ENCODE measurements at regions of chr20 and their contacts with region 1.

Region 1: GRCh38 chr20:17604852-17605660 is 35.2 kb downstream of the DSTN start:
- DNase-seq: peak; percentile 75
- ATAC-seq: peak; percentile 71
- H3K4me3 ChIP-seq: no peak overlapping the region
- H3K27ac ChIP-seq: 0 out of 2 replicates have a peak overlapping the region, but pooled peaks have one; percentile 9
- H3K4me1 ChIP-seq: peaks cover 23% of the 10 kb centered on the region
- H3K27me3 ChIP-seq: no peaks in the 10 kb centered on the region
- CTCF ChIP-seq: no peak

Region 2: DNA sequence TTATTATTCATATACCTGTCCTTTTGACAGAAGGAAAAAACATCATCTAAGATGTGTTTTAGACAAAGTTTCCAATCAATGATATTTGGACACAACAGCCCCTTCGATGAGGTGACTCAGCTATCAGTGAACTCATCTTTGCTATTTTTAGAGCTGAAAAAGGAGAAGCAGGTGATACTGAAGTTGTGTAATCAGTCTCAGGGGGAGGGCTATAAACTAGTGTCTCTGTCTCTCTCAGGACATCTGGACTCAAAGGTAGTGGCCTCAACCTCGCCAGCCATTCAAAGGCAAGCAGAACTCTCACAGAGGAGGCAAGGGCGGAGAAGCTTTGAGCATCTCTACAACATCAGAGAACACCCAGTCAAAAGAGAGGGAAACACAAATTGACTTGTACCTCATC is 209.3 kb before region 1 on chr20:
- CTCF ChIA-PET with region 1: no interaction called
- POLR2A ChIA-PET with region 1: no interaction called
- intact Hi-C with region 1: no loop called
- DNase-seq: no peak
- ATAC-seq: no peak
- H3K4me3 ChIP-seq: no peak overlapping the region
- H3K27ac ChIP-seq: no peak overlapping the region
- H3K4me1 ChIP-seq: no peaks in the 10 kb centered on the region
- H3K27me3 ChIP-seq: peaks cover 83% of the 10 kb centered on the region
- CTCF ChIP-seq: no peak

Region 3: DNA sequence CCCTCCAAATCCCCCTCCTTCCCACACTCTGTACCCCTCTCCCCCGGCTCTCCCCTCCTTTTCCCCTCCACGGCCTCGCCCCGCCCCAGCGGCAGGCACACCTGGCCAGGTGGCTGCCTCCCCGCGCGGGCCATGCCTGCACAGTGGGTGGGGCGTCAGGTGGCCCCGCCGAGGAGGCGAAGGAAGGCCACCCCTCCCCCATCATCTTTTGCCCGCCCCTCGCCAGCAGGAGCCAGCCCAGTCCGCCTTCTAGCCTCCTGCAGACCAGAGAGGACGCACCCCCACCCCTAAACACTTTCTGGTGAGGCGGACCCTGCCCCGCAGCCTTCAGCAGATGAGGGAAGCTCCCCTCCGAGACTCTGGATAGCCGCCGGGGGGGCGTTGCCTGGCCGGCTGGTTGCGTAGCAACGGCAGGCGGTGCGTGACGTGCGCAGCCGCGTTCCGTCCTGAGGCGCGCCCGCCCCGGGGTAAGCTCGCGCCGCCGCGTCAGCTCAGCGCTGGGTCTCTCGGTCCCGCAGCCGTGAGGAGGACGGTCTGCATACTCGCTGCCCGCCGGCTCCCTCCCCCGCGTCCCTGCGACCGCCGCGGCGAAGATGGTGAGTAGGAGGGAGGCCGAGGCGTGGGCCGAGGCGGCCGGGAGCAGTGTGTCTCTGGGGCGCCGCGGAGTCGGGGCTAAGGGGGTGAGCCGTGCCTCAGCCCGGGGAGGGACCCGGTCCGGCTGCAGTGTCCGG is 35.3 kb before region 1 on chr20 and contains the start of gene DSTN:
- CTCF ChIA-PET with region 1: interaction called, 4 read pairs
- POLR2A ChIA-PET with region 1: interaction called, 14 read pairs
- intact Hi-C with region 1: loop called (anchors 2 kb)
- DNase-seq: peak; percentile 98
- ATAC-seq: peak; percentile 71
- H3K4me3 ChIP-seq: peak within 1 kb of the TSS; percentile 97
- H3K27ac ChIP-seq: peak within 1 kb of the TSS; percentile 89
- H3K4me1 ChIP-seq: peaks cover 39% of the 10 kb centered on the region
- H3K27me3 ChIP-seq: no peaks in the 10 kb centered on the region
- CTCF ChIP-seq: no peak
- total RNA-seq, gene DSTN: 177 and 182 TPM in 2 replicates

Region 4: GRCh38 chr20:17624021-17624420 is 19.0 kb after region 1 on chr20:
- CTCF ChIA-PET with region 1: no interaction called
- POLR2A ChIA-PET with region 1: interaction called, 11 read pairs
- intact Hi-C with region 1: no loop called
- DNase-seq: no peak
- ATAC-seq: no peak
- H3K4me3 ChIP-seq: no peak overlapping the region
- H3K27ac ChIP-seq: no peak overlapping the region
- H3K4me1 ChIP-seq: no peaks in the 10 kb centered on the region
- H3K27me3 ChIP-seq: no peaks in the 10 kb centered on the region
- CTCF ChIP-seq: no peak